GM12878 (cell line): ENCODE measurements at regions of chr16 and their contacts with region 1.

Region 1: GRCh38 chr16:60914334-60914733 is 1121.9 kb downstream of the CDH8 start:
- DNase-seq: no peak
- ATAC-seq: no peak
- H3K4me3 ChIP-seq: no peak overlapping the region
- H3K27ac ChIP-seq: no peak overlapping the region
- H3K4me1 ChIP-seq: no peaks in the 10 kb centered on the region
- H3K27me3 ChIP-seq: no peaks in the 10 kb centered on the region
- CTCF ChIP-seq: no peak
- EP300 ChIP-seq: no peak
- POLR2A ChIP-seq: no peak
- RAD21 ChIP-seq: no peak

Region 2: DNA sequence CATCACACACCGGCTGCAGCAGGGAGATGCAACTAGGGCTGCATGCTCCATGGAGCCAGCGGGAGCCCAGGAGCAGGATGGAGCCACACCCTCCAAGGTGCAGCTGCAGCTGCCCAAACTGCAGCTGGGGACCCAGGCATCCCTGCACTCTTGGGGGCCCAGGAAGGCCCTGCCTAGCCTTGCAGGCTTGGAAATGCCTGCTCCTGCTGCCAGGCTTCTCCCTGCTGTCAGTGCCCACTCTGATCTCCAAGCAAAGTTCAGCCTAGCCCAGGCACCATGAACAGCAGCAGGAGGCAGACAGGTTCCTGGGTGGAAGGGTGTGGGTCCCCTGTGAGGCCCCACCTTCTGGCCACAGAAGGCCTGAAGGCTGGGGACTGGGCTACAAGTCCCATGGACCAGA is 64.8 kb after region 1 on chr16:
- CTCF ChIA-PET with region 1: no interaction called
- POLR2A ChIA-PET with region 1: no interaction called
- RAD21 ChIA-PET with region 1: no interaction called
- SMC1A ChIA-PET with region 1: no interaction called
- in situ Hi-C with region 1: no loop called
- intact Hi-C with region 1: loop called (anchors 10 kb)
- DNase-seq: no peak
- ATAC-seq: no peak
- H3K4me3 ChIP-seq: no peak overlapping the region
- H3K27ac ChIP-seq: no peak overlapping the region
- H3K4me1 ChIP-seq: no peaks in the 10 kb centered on the region
- H3K27me3 ChIP-seq: no peaks in the 10 kb centered on the region
- CTCF ChIP-seq: no peak
- EP300 ChIP-seq: no peak
- POLR2A ChIP-seq: no peak
- RAD21 ChIP-seq: no peak